ENCODE measurements at regions of chr20 and their contacts with region 1.

Region 1: DNA sequence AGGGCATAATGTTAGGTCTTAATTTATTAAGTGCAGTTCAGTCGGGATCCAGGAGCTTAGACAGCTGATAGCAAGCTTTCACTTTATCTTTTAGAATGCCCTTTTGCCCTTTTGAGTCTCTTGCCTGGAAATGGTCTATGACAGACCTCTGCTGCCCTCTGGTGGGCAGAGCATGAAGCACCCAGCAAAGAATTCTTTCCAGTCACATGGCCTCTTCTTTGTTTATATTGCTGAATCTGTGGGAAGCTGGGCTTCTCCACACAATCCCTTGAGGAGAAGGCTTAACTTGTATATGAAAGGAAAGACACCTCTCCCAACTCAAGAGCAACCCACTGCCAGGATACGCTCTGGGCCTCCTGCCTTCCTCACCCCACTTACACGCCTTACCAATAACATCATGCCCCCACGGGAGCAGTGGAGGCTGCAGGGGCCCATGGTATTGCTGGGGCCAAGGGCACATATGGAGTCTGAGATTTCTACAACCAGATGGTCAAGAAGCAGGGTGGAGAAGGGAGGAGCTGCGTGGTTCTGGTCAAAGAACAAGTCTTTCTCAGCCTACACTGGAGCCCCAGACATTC is 20.4 kb downstream of the WFDC3 start:
- DNase-seq: peak; percentile 80 to 91
- H3K4me3 ChIP-seq: no peak overlapping the region
- H3K27ac ChIP-seq: no peak overlapping the region
- H3K4me1 ChIP-seq: peaks cover 2 to 7% (median 5%) of the 10 kb centered on the region in 4 experiments
- H3K27me3 ChIP-seq: no peaks in the 10 kb centered on the region
- CTCF ChIP-seq: peak; percentile 61 to 94 (median 93)
- EP300 ChIP-seq: no peak
- POLR2A ChIP-seq: no peak
- RAD21 ChIP-seq: peak; percentile 99

Region 2: DNA sequence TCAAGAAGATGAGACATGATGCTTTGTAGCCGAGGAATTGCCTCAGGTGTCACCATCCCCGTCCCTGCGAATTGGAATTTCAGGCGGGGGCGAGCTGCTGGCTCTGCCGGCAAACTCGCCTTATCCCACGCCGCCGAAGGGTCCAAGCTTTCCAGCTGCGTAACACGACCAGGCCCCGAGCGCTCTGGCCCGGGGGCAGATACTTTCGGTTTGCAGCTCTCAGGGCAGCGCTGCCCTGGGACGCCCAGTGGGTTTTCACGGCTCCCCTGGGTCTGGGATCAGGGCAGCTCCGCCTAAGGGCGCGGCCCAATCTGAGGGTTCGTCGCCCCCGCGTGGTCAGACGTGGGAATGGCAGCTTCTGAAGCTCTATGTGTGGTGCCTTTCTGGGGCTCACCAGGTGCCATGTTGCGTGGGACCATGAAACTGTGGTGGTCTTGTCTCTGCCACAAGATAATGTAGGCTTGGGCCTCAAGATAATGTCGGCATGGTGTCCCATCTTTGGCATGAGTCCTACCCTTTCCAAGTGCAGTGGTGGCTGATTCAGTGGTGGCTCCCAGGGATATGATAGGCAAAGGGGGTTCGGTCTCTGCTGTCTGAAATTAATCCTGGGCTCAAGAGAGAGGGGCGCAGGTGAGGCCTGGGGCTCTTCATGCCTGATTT is 334.4 kb before region 1 on chr20:
- CTCF ChIA-PET with region 1: interaction called, 12 read pairs
- POLR2A ChIA-PET with region 1: interaction called, 4 read pairs
- DNase-seq: peak in 1 of 2 experiments; percentile 97
- H3K4me3 ChIP-seq: peak overlapping the region; percentile 17 to 72 (median 61); a peak in 7 of 8 replicates
- H3K27ac ChIP-seq: no peak overlapping the region
- H3K4me1 ChIP-seq: no peaks in the 10 kb centered on the region
- H3K27me3 ChIP-seq: no peaks in the 10 kb centered on the region
- CTCF ChIP-seq: peak; percentile 93 to 97 (median 95)
- EP300 ChIP-seq: no peak
- POLR2A ChIP-seq: no peak
- RAD21 ChIP-seq: peak; percentile 91 to 95

Region 3: GRCh38 chr20:45487231-45487635 is 284.0 kb before region 1 on chr20:
- CTCF ChIA-PET with region 1: interaction called, 18 read pairs
- POLR2A ChIA-PET with region 1: no interaction called
- DNase-seq: peak in 1 of 2 experiments; percentile 77
- H3K4me3 ChIP-seq: peak overlapping the region; percentile 38 to 60 (median 43)
- H3K27ac ChIP-seq: no peak overlapping the region
- H3K4me1 ChIP-seq: peaks cover 0 to 11% (median 0%) of the 10 kb centered on the region in 4 experiments; a peak in 2 of 7 replicates
- H3K27me3 ChIP-seq: no peaks in the 10 kb centered on the region
- CTCF ChIP-seq: peak; percentile 26 to 46 (median 46); a peak in 3 of 4 replicates
- EP300 ChIP-seq: no peak
- POLR2A ChIP-seq: no peak
- RAD21 ChIP-seq: peak; percentile 37 to 46

Region 4: DNA sequence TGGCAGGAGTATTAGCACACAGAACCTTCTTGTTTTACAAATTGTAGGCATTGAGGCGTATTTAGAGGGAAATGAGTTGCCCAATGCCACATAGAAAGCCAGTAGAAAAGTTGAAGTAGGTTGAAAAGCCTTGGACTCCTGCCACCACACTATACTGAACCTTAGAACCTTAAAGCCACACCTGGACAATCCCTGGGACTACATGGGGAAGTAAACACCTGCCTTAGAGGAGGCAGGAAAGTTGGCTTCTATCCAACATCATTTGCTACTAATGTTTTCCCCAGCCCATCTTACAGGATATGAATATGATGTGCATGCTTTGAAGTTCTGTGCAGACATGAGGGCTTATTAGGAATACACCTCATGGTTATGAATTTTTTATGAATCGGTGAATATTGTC is 218.8 kb before region 1 on chr20:
- CTCF ChIA-PET with region 1: interaction called, 73 read pairs
- POLR2A ChIA-PET with region 1: no interaction called
- DNase-seq: no peak
- H3K4me3 ChIP-seq: no peak overlapping the region
- H3K27ac ChIP-seq: no peak overlapping the region
- H3K4me1 ChIP-seq: no peaks in the 10 kb centered on the region
- H3K27me3 ChIP-seq: no peaks in the 10 kb centered on the region
- CTCF ChIP-seq: no peak
- EP300 ChIP-seq: no peak
- POLR2A ChIP-seq: no peak
- RAD21 ChIP-seq: no peak

Region 5: GRCh38 chr20:45629496-45630100 is 141.7 kb before region 1 on chr20 and contains the start of gene WFDC10A:
- CTCF ChIA-PET with region 1: interaction called, 71 read pairs
- POLR2A ChIA-PET with region 1: interaction called, 3 read pairs
- DNase-seq: peak; percentile 33 to 65
- H3K4me3 ChIP-seq: no peak within 1 kb of the TSS
- H3K27ac ChIP-seq: no peak within 1 kb of the TSS
- H3K4me1 ChIP-seq: peaks cover 0 to 2% (median 0%) of the 10 kb centered on the region in 4 experiments; a peak in 2 of 7 replicates
- H3K27me3 ChIP-seq: 0 out of 7 replicates have a peak, but pooled peaks cover 0 to 2% (median 0%) of the 10 kb centered on the region in 4 experiments
- CTCF ChIP-seq: peak; percentile 67 to 95 (median 69)
- EP300 ChIP-seq: no peak
- POLR2A ChIP-seq: no peak
- RAD21 ChIP-seq: peak; percentile 68 to 77
- total RNA-seq, gene WFDC10A: not detected in 2 replicates

Region 6: GRCh38 chr20:45798935-45799642 is 27.8 kb after region 1 on chr20:
- CTCF ChIA-PET with region 1: interaction called, 18 read pairs
- POLR2A ChIA-PET with region 1: no interaction called
- DNase-seq: peak; percentile 36 to 81
- H3K4me3 ChIP-seq: no peak overlapping the region
- H3K27ac ChIP-seq: no peak overlapping the region
- H3K4me1 ChIP-seq: no peaks in the 10 kb centered on the region; a peak in 1 of 7 replicates
- H3K27me3 ChIP-seq: no peaks in the 10 kb centered on the region
- CTCF ChIP-seq: peak; percentile 67 to 90 (median 82)
- EP300 ChIP-seq: no peak
- POLR2A ChIP-seq: no peak
- RAD21 ChIP-seq: peak; percentile 68 to 83

Region 7: DNA sequence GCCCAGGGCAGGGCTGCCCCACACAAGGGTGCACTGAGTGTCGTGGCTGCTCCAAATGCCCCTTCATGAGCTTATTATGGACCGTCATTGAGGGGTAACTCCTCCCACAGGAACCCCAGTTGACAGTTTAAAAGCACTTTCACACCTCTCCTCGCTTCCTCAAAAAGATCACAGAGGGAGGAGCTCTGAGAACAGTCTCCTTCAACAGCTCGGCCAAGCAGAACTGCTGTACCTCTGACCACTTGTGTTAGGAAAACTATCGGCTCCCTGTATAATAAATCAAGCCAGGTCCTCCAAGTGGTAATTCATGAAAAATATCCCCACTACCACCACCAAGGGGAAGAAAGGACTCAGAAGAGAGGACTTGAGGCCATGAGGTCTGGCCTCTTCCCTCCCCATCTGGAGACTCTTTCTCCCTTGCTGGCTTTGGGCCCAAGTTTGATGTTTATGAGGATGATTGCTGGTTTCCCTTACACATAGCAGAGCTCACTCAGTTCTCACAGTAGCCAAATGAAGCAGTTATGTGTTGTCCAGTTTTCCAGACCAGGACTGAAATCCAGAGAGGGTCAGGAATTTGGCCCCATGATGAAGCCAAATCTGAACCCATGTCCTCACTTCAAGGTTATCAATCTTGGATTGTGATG is 71.0 kb after region 1 on chr20:
- CTCF ChIA-PET with region 1: no interaction called
- POLR2A ChIA-PET with region 1: no interaction called
- DNase-seq: no peak
- H3K4me3 ChIP-seq: no peak overlapping the region
- H3K27ac ChIP-seq: no peak overlapping the region
- H3K4me1 ChIP-seq: no peaks in the 10 kb centered on the region
- H3K27me3 ChIP-seq: no peaks in the 10 kb centered on the region
- CTCF ChIP-seq: no peak
- EP300 ChIP-seq: no peak
- POLR2A ChIP-seq: no peak
- RAD21 ChIP-seq: no peak

Region 8: GRCh38 chr20:45987108-45987780 is 216.0 kb after region 1 on chr20:
- CTCF ChIA-PET with region 1: no interaction called
- POLR2A ChIA-PET with region 1: no interaction called
- DNase-seq: peak in 1 of 2 experiments; percentile 95
- H3K4me3 ChIP-seq: no peak overlapping the region
- H3K27ac ChIP-seq: no peak overlapping the region
- H3K4me1 ChIP-seq: peaks cover 0 to 8% (median 6%) of the 10 kb centered on the region in 4 experiments; a peak in 5 of 7 replicates
- H3K27me3 ChIP-seq: no peaks in the 10 kb centered on the region
- CTCF ChIP-seq: peak; percentile 90 to 96 (median 95)
- EP300 ChIP-seq: no peak
- POLR2A ChIP-seq: no peak
- RAD21 ChIP-seq: peak; percentile 79 to 89

Region 9: GRCh38 chr20:46192376-46192944 is 421.2 kb after region 1 on chr20:
- CTCF ChIA-PET with region 1: no interaction called
- POLR2A ChIA-PET with region 1: no interaction called
- DNase-seq: no peak
- H3K4me3 ChIP-seq: no peak overlapping the region
- H3K27ac ChIP-seq: no peak overlapping the region
- H3K4me1 ChIP-seq: peaks cover 0 to 4% (median 1%) of the 10 kb centered on the region in 4 experiments; a peak in 4 of 7 replicates
- H3K27me3 ChIP-seq: no peaks in the 10 kb centered on the region; a peak in 1 of 7 replicates
- CTCF ChIP-seq: no peak
- EP300 ChIP-seq: no peak
- POLR2A ChIP-seq: no peak
- RAD21 ChIP-seq: no peak